Activated CD4-positive, alpha-beta T cell treated with anti-CD3 and anti-CD28 coated beads for 36 hours (primary cell): ENCODE measurements at regions of chr18 and their contacts with region 1.

Region 1: DNA sequence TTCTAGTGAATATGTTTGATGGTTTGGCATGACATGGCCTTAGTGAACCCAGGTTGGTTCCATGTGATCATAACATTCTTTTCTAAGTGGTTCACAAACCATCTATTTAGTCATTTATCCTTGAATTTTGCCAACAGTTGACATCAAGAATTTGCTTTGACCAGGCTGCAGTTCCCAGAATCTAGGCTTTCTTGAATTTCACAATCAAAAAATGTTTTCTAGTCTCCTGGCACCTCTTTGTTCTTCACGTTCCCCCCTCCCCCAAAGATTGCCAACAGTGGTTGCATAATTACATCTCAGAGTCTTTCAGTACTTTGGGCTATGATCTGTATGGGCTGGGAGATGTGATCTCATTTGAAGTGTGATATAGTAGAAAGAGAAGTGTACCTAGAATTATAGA is 124.0 kb downstream of the GATA6 start:
- DNase-seq: no peak
- ATAC-seq: no peak
- H3K4me3 Mint-ChIP-seq: no peak overlapping the region
- H3K27ac Mint-ChIP-seq: no peak overlapping the region
- H3K4me1 Mint-ChIP-seq: no peaks in the 10 kb centered on the region
- H3K27me3 Mint-ChIP-seq: no peaks in the 10 kb centered on the region

Region 2: DNA sequence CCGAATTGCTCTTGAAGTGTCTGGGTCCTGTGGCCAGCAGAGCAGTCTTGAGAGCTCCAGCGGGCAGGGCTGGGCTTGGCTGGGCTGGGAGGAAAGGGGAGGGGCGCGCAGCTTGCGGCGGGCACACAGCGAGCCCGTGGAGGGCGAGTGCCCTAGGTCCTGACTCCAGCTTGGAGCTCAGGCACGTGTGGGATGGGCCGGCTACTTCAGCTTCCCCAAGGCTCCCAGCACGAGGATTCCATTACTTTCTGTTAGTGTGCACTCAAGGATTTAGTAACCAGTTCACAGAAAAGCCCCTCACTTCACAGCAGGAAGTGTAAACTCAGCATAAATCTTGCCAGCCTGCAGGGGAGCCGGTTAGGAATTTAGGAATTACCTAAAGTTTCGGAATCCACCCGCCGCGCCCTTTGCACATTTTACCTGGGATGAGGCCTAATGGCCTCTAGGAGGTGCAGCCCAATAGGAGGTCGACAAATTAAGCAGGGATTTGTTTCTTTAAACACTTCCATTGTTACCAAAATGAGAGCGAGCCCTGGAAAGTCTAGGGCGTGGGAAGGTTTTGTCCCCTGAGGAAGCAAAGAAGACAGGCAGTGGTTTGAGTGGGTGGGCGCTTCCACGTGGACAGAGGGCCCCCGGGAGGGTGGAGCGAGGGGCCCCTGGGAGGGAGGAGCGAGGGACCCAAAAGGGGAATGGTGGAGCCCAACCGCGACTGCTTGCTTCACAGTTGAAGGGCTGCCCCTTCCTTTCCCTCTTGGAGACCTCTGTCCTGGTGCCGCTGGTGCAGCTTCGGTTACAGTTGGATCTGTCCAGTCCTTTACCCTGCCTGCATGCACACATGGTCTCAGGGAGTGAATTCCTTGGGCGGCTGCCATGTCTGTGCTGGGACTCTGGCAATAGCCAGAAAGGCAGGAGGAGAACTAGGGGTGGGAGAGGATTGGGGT is 31.0 kb after region 1 on chr18:
- CTCF ChIA-PET with region 1: no interaction called
- POLR2A ChIA-PET with region 1: no interaction called
- intact Hi-C with region 1: no loop called
- DNase-seq: no peak
- ATAC-seq: no peak
- H3K4me3 Mint-ChIP-seq: no peak overlapping the region
- H3K27ac Mint-ChIP-seq: no peak overlapping the region
- H3K4me1 Mint-ChIP-seq: no peaks in the 10 kb centered on the region
- H3K27me3 Mint-ChIP-seq: no peaks in the 10 kb centered on the region

Region 3: DNA sequence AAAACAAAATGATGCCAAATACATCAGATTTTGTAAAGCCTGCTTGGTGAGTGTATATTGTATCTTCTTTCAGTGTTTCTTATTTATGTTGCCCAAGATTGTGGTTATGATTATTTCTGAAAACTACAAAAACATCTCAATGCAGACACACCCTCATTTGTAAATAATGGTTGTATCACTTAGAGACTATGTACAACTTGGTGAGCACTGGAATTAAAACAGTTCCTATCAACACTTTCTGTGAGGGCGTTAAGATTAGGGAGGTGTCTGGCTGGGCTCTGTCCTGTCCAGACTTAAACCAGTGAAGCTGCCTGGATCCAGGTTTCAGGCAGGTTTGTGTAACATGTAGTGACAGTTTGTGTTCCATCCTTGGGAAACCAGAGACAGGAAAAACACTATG is 74.6 kb after region 1 on chr18:
- CTCF ChIA-PET with region 1: no interaction called
- POLR2A ChIA-PET with region 1: no interaction called
- intact Hi-C with region 1: loop called in 1 of 2 experiments (anchors 2 kb)
- DNase-seq: no peak
- ATAC-seq: no peak
- H3K4me3 Mint-ChIP-seq: no peak overlapping the region
- H3K27ac Mint-ChIP-seq: no peak overlapping the region
- H3K4me1 Mint-ChIP-seq: no peaks in the 10 kb centered on the region
- H3K27me3 Mint-ChIP-seq: peaks cover 5% of the 10 kb centered on the region